PC-9 (cell line): ENCODE measurements at regions of chr21 and their contacts with region 1.

Region 1: GRCh38 chr21:29449306-29449950 is 150.7 kb downstream of the BACH1 start:
- DNase-seq: no peak
- H3K4me3 ChIP-seq: no peak overlapping the region
- H3K27ac ChIP-seq: no peak overlapping the region
- H3K4me1 ChIP-seq: no peaks in the 10 kb centered on the region
- H3K27me3 ChIP-seq: no peaks in the 10 kb centered on the region
- CTCF ChIP-seq: no peak

Region 2: DNA sequence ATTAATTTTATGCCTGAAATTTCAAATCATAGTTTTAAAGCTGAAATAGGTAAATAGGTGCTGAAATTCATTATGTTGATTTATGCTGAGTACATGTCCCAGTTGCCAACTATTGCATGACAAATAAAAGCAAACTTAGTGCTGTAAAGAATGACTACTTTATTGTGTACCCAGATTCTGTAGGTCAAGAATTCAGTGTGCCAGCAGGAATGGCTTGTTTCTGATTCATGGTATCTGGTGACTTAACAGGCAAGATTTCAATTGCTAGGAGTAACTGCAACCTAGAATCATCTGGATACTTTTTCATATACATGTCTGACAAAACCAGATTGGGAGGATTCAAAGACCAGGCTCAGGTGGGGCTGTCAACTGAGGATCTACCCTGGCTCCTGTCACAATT is 1804.1 kb before region 1 on chr21:
- CTCF ChIA-PET with region 1: no interaction called
- POLR2A ChIA-PET with region 1: interaction called, 14 read pairs
- intact Hi-C with region 1: no loop called
- DNase-seq: no peak
- H3K4me3 ChIP-seq: no peak overlapping the region
- H3K27ac ChIP-seq: no peak overlapping the region
- H3K4me1 ChIP-seq: no peaks in the 10 kb centered on the region
- H3K27me3 ChIP-seq: no peaks in the 10 kb centered on the region
- CTCF ChIP-seq: no peak

Region 3: DNA sequence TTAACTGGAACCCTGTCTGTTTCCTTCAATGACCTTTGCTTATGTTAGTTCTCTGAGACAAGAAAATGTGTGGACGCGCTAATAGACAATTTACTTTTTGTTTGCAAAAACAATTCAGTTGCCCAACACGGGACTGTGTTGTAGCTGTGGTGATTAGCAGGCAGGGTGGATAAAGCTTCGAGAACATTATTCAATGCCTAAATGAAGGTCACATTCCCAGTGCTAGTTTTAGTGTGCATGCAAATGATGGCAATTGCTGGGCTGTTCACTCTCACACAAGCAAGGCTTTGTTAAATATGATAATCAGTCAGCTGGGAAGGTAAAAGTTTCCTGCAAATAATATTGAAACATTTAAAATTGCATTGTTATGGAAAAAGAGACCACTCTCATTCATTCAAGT is 37.7 kb after region 1 on chr21:
- CTCF ChIA-PET with region 1: no interaction called
- POLR2A ChIA-PET with region 1: no interaction called
- intact Hi-C with region 1: no loop called
- DNase-seq: no peak
- H3K4me3 ChIP-seq: no peak overlapping the region
- H3K27ac ChIP-seq: no peak overlapping the region
- H3K4me1 ChIP-seq: no peaks in the 10 kb centered on the region
- H3K27me3 ChIP-seq: no peaks in the 10 kb centered on the region
- CTCF ChIP-seq: no peak

Region 4: DNA sequence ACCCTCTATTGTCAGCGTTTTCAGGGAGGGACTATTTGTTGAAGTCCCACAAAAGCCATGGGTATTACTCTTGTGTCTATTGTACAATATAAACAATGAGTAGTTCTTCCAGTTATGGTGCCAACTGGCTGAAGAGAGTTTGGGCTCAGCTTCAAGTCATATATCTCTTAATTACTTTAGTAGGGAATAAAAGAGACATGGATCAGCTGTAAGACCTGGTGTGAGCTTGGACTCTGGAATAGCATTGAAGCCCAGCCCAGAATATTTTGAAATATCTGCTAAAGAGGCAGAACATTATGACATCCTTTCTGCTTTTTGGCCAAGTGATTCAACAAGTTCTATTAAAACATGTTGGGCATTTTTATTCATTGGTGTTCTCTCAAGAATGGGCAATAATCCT is 74.2 kb after region 1 on chr21:
- CTCF ChIA-PET with region 1: no interaction called
- POLR2A ChIA-PET with region 1: no interaction called
- intact Hi-C with region 1: no loop called
- DNase-seq: no peak
- H3K4me3 ChIP-seq: no peak overlapping the region
- H3K27ac ChIP-seq: no peak overlapping the region
- H3K4me1 ChIP-seq: no peaks in the 10 kb centered on the region
- H3K27me3 ChIP-seq: no peaks in the 10 kb centered on the region
- CTCF ChIP-seq: no peak

Region 5: GRCh38 chr21:29538115-29538514 is 88.7 kb after region 1 on chr21:
- CTCF ChIA-PET with region 1: no interaction called
- POLR2A ChIA-PET with region 1: no interaction called
- intact Hi-C with region 1: no loop called
- DNase-seq: no peak
- H3K4me3 ChIP-seq: no peak overlapping the region
- H3K27ac ChIP-seq: no peak overlapping the region
- H3K4me1 ChIP-seq: no peaks in the 10 kb centered on the region
- H3K27me3 ChIP-seq: no peaks in the 10 kb centered on the region
- CTCF ChIP-seq: no peak